G401 (cell line): ENCODE measurements at regions of chr4 and their contacts with region 1.

Region 1: DNA sequence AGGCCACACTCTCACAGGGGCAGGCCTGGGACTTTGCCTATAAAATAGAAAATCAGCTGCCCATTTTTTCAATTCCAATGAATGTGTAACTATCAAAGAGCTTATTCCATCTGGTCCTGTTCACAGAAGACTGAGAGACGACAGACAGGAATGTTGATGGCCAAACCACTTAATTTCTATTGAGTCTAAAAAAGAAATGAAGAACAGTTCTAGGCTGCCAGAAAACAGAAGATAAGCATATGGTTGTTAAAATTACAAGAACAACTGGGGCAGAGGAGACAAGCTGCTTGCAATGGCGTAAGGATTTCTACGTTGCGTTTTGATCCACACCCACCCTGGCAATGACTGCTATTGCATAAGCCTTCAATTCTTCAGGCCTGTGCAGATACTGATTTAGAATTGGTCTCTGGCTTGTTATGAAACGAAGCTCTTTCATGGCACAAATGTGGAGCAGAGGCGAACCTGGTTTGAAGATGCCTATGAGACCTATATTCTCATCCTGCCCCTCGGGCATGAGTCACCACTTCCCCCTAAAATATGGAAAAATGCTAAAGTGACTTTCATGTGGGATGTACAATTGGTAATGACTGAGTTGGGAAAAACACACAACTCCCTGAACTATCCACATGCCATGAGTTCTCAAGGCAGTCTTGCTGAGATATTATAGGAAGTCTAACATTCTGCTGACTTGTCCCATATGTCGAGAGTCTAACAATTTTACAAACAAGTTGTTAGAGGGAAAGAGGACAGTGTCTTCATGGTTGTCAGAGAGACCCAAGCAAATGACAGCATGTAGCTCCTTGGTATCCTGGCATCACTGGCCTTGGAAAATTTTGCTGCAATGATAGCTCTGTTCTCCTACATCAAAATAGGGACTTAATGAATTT is 37.9 kb upstream of the SORBS2 start:
- DNase-seq: no peak

Region 2: DNA sequence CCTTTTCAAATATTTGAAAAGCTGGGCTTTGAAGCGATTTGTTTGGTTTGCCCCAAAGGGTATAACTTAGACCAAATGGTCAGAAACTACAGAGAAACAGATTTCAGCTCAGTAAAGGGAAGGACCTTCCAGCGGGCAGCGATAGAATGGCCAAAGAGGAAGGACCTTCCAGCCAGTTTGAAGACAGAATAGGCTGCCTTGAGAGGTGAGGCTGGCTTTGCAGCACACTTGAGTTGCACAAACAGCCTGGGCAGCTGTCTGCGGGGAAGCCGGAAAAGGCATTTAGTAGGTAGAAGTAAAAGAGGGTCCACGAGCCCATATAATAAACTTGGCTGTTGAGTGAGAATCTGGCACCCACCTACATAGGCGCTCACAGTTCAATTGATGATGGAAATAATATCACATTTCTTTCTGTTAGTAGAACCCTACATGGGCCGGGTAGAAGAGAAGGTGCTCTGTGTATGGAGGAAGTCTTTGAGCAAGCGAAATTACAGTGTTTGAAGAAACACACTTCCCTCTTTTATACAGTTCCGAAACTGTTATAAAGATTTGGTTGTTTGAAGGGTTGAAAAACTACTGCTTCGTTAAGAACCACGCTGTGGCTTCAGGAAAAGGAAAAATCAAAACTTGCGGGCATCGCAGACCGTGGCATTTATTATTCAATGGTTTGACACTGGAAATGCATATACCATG is 37.1 kb after region 1 on chr4:
- in situ Hi-C with region 1: loop called (anchors 5 kb)
- DNase-seq: no peak